ENCODE measurements at regions of chr3 and their contacts with region 1.

Region 1: DNA sequence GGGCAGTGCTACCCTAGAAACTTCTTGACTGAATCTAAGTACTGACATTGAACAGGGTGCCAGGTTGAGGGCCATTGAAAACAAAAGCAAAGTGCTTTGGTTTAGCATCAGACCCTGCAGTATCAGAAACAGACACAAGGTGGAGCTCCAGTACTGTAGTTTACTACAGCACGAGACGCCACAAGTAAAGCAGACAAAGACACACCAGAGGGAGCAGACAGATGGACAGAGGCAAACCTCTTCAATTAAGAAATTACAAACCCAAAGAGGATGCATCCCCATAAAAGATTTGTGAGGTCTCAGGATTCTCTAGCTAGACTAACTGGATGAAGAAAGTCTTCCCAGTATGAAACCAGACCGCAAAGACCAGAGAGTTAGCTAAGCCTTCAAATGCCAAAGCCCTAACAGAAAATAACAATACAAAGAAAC is 16.6 kb downstream of the TOP2B start:
- DNase-seq: no peak
- ATAC-seq: peak; percentile 91

Region 2: DNA sequence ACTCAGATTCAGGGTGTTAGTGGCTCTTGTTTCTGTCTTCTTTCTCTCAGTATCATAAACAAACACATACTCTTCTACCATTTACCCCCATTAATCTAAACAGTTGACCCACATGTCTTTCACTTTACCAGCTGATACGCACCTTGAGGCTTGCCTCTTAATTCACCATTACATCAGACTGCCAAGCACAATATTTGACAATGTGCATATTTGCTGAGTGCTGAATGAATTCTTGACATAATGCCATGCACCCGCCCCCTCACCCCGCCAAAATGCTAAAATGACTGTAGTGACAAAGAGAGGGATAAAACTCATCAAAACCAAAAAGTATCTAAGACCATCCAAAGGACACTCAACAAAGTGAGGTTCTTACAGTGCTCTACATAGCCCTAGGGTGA is 77.7 kb after region 1 on chr3:
- intact Hi-C with region 1: loop called (anchors 10 kb)
- DNase-seq: no peak
- ATAC-seq: no peak

Region 3: DNA sequence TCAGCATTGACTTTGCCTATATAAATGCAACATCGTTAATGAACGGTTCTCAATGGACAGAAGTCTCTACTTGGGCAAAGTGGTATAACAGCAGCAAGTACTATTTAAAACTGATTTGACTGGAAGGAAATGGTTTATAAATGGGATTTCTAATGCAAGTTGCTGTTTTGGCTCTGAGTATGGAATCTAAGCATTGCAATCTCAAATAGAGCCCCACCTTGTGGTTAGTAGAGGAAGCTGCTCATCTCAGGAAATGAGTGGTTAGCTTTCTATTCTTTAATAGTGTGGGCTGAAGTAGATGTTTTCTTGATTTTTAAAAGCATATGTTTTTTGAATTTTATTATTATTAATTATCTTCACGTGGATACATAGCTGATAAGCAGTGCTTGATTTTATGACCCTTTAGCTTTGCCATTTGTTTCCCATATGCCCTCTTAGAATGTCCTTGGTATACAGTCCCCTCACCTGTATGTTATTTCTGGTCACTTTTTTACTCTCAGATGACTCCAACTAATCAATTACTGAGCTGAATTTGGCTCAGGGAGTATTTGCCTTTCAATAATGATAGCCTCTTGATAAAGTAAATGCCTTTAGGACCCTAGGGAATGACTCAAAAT is 208.9 kb after region 1 on chr3:
- intact Hi-C with region 1: loop called (anchors 5 kb)
- DNase-seq: no peak
- ATAC-seq: peak; percentile 62

Region 4: GRCh38 chr3:26118165-26118564 is 470.0 kb after region 1 on chr3:
- intact Hi-C with region 1: loop called (anchors 10 kb)
- DNase-seq: no peak
- ATAC-seq: peak; percentile 59